AG04449 (cell line): ENCODE measurements at regions of chr1 and their contacts with region 1.

Region 1: GRCh38 chr1:97137862-97138514 is 416.4 kb downstream of the PTBP2 start:
- DNase-seq: peak; percentile 37
- H3K4me3 ChIP-seq: no peak overlapping the region
- CTCF ChIP-seq: peak; percentile 75

Region 2: DNA sequence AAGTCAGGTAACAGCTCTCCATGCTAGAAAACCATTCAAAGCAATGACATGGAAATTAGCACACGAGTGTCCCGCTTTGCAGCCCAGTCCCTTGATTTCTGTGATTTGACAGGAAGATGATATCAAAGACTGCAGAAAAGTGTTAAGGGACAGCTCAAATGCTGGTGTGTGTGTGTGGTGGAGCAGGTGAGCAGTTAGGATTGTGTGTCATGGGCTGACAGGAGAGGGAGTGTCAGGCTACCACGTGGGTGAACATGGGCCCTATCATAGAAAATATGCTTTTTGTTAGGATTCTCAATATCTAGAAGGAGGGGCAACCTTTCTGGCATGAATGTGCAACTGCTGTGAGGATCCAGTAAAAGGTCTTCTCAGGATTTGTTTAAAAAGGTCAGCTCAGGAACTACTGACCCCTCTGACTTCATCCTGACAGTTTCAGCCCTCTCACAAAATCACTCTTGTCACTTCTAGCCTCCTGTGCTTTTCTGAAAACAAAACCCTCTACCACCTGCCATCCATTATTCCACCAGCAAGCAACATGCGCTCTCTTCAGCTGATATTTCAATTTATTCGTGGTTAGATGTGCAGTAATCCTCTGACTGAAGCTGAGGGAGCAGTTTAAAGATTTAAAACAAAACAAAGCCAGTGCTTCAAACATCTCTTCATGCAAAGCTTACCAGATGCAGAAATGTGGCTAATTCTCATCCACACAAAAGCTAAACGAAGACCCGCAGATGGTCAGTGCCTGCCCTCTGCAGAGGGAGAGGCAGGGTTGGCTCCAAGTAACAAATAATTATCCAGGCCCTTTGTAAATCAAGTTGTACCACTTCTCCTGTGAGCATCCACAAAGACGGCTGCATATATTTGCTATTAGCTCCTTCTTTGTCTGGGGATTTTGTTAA is 18.5 kb before region 1 on chr1:
- CTCF ChIA-PET with region 1: interaction called, 10 read pairs
- POLR2A ChIA-PET with region 1: no interaction called
- DNase-seq: no peak
- H3K4me3 ChIP-seq: no peak overlapping the region
- CTCF ChIP-seq: no peak

Region 3: DNA sequence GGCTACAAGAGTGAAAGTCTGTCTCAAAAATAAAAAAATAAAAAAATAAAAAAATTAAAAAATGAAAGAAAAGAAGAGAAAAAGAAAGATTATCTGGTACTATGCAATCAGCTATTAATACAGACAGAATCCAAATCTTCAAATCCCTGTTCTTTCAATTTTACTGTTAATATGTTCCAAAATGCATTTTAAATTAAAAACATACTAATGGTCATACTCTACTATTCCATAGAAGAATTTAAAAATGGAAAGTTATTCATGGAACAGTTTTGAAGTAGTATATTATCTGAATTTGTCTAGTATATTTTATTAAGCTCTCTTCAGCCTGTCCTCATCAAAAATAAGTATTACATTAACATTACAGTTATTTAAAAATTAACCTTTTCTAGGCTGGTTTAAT is 13.7 kb after region 1 on chr1:
- CTCF ChIA-PET with region 1: interaction called, 14 read pairs
- POLR2A ChIA-PET with region 1: no interaction called
- DNase-seq: no peak
- H3K4me3 ChIP-seq: no peak overlapping the region
- CTCF ChIP-seq: no peak